Ovary (tissue), 10 donors: ENCODE measurements at regions of chr1 and their contacts with region 1.

Region 1: DNA sequence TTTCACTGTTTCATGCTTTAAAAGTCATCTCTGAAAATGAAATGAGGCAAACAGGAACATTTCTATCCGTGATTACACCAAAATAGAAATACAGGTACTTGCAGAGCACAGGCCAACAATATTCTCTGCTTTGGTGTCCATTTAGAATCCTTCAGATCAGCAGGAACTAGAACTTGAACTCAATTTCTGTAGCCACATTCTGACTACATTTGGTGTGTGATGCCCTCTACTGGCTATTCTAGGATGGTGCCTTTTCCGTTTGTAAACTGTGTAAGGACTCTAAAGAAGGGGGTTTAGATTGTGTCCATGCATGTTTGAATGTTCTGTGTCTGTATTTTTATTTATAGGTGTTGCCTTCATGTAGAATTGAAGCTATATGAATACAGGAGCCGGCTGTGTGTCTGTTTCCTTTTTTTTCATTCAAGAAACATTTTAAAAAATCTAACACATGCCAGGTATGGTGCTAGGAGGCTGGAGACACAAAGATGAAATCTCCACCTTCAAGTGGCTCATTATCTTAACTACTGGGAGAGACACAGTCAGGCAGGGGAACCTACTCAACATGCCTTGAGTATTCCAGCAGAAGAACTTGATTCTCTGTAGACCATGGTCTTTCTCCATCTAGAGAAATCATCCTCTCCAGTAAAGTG is 7.6 kb upstream of the ZNF326 start:
- DNase-seq: peak in 2 of 5 donors; percentile 18 to 59
- H3K4me3 ChIP-seq: no peak overlapping the region
- H3K27ac ChIP-seq: no peak overlapping the region
- H3K4me1 ChIP-seq: peaks cover 2% of the 10 kb centered on the region
- H3K27me3 ChIP-seq: no peaks in the 10 kb centered on the region
- CTCF ChIP-seq: peak; percentile 53 to 80 (median 74)
- EP300 ChIP-seq: no peak
- POLR2A ChIP-seq: no peak

Region 2: GRCh38 chr1:89804642-89805237 is 182.6 kb before region 1 on chr1:
- intact Hi-C with region 1: loop called (anchors 2 to 5 kb)
- DNase-seq: peak; percentile 75 to 85 (median 78)
- H3K4me3 ChIP-seq: no peak overlapping the region
- H3K27ac ChIP-seq: no peak overlapping the region
- H3K4me1 ChIP-seq: no peaks in the 10 kb centered on the region
- H3K27me3 ChIP-seq: no peaks in the 10 kb centered on the region
- CTCF ChIP-seq: peak; percentile 51 to 76 (median 70)
- EP300 ChIP-seq: no peak
- POLR2A ChIP-seq: no peak